ENCODE measurements at regions of chr12 and their contacts with region 1.

Region 1: DNA sequence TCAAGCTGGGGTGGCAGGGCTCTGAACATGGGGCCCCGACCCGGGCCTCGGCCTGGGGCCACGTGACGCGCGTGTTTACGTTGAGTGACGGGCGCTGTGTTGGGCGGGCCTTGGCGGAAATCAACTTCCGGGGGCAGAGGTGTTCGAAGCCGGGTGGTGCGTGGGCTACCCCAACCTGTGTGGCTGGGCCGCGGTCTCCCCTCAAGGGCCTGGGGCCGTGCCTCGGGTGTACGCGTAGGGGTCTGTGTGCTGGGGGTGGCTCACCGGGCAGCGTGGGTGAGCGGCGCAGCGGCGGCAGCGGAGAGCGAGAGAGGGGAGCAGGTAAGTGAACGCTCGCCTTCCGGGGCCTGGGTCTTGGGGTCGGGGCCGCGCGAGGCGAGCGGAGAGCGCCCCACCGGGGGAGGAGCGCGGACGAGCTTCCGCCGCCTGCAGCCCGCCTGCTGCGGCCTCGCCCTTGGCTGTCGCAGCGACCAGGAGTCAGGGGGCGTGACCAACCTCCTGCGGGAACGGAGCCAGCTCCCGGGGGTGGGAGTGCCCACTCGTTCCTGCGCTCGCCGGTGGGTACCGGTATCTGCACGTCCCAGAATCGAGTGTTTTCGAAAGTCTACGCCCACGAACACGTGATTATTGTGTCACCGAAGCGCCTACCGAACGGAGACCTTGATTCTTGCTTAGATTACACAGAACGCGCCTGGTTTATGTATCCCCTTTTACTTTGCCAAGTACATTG is at the start of gene CCDC91:
- DNase-seq: peak; percentile 80 to 96 (median 89)
- ATAC-seq: peak; percentile 77
- H3K4me3 ChIP-seq: peak within 1 kb of the TSS; percentile 58 to 90
- H3K4me3 Mint-ChIP-seq: peak within 1 kb of the TSS; percentile 97
- H3K27ac ChIP-seq: peak within 1 kb of the TSS; percentile 91 to 100
- H3K27ac Mint-ChIP-seq: peak within 1 kb of the TSS; percentile 99
- H3K4me1 ChIP-seq: peaks cover 27% of the 10 kb centered on the region
- H3K4me1 Mint-ChIP-seq: peaks cover 67% of the 10 kb centered on the region
- H3K27me3 ChIP-seq: no peaks in the 10 kb centered on the region
- H3K27me3 Mint-ChIP-seq: no peaks in the 10 kb centered on the region
- CTCF ChIP-seq: no peak
- total RNA-seq, gene CCDC91: 54.3 to 63.1 TPM

Region 2: GRCh38 chr12:27243804-27244683 is 946.4 kb before region 1 on chr12 and contains the start of gene STK38L:
- CTCF ChIA-PET with region 1: no interaction called
- POLR2A ChIA-PET with region 1: no interaction called
- intact Hi-C with region 1: loop called (anchors 10 kb)
- DNase-seq: peak; percentile 90 to 99 (median 98)
- ATAC-seq: peak; percentile 95
- H3K4me3 ChIP-seq: peak within 1 kb of the TSS; percentile 84 to 89
- H3K4me3 Mint-ChIP-seq: peak within 1 kb of the TSS; percentile 96
- H3K27ac ChIP-seq: peak within 1 kb of the TSS; percentile 76
- H3K27ac Mint-ChIP-seq: peak within 1 kb of the TSS; percentile 96
- H3K4me1 ChIP-seq: peaks cover 14% of the 10 kb centered on the region
- H3K4me1 Mint-ChIP-seq: peaks cover 52% of the 10 kb centered on the region
- H3K27me3 ChIP-seq: no peaks in the 10 kb centered on the region
- H3K27me3 Mint-ChIP-seq: no peaks in the 10 kb centered on the region
- CTCF ChIP-seq: no peak
- total RNA-seq, gene STK38L: 27.0 to 28.6 TPM

Region 3: DNA sequence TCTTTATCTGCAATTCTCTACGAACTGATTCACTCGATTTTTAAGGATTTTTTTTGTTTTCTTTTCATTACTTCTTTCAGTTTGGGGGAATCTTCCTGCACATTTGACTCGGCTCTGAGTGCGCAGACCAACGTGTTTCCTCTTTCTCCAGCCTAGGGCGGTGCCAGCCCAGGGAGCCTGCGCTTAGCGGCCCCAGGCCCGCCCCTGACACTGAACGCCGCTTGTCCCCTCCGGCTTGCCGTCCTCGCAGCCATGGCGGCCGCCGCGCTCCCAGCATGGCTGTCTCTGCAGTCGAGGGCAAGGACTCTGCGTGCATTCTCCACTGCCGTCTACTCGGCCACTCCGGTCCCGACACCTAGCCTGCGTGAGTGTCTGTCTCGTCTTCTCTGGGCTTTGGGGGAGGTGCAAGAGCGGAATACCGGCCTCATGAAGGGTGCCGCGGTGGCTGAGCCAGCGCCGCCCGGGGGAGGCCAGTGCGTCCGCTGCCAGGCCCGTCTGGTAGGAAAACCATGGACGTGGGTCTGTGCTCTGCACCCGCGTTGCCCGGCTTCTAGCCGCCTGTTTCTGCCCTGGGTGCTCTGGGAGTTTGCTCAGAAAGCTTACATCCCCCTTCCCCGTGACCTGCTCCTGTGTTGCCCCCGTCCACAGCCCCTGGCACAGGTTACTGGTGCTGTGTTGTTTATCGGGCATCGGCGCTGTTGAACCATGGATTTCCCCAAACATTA is 479.7 kb before region 1 on chr12 and contains the start of gene MRPS35:
- CTCF ChIA-PET with region 1: no interaction called
- POLR2A ChIA-PET with region 1: no interaction called
- intact Hi-C with region 1: loop called (anchors 2 to 10 kb)
- DNase-seq: peak; percentile 83 to 95 (median 90)
- ATAC-seq: peak; percentile 96
- H3K4me3 ChIP-seq: peak within 1 kb of the TSS; percentile 86 to 89
- H3K4me3 Mint-ChIP-seq: peak within 1 kb of the TSS; percentile 96
- H3K27ac ChIP-seq: peak within 1 kb of the TSS; percentile 68 to 71
- H3K27ac Mint-ChIP-seq: peak within 1 kb of the TSS; percentile 95
- H3K4me1 ChIP-seq: peaks cover 11% of the 10 kb centered on the region
- H3K4me1 Mint-ChIP-seq: peaks cover 36% of the 10 kb centered on the region
- H3K27me3 ChIP-seq: no peaks in the 10 kb centered on the region
- H3K27me3 Mint-ChIP-seq: peaks cover 6% of the 10 kb centered on the region
- CTCF ChIP-seq: no peak
- total RNA-seq, gene MRPS35: 30.0 to 30.8 TPM

Region 4: DNA sequence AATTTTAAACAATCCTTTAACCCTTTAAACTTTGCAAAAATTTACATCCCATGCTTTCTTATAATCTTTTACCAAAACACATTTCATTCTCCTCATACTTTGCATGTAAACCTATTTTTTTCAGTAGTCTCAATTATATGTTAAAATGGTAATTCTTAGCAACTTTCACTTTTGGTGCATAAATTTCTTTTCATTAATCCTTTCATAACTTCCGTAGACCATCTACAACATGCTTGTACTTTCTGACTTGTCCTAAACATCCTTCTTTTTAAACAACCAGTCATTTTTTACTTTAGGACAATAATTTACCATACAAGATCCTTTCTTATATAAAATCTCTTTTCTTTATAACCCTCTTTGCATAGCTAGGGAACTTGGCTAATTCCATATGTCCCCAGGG is 19.3 kb after region 1 on chr12:
- CTCF ChIA-PET with region 1: no interaction called
- POLR2A ChIA-PET with region 1: interaction called, 10 read pairs
- intact Hi-C with region 1: no loop called
- DNase-seq: no peak
- ATAC-seq: no peak
- H3K4me3 ChIP-seq: no peak overlapping the region
- H3K4me3 Mint-ChIP-seq: no peak overlapping the region
- H3K27ac ChIP-seq: no peak overlapping the region
- H3K27ac Mint-ChIP-seq: no peak overlapping the region
- H3K4me1 ChIP-seq: no peaks in the 10 kb centered on the region
- H3K4me1 Mint-ChIP-seq: peaks cover 31% of the 10 kb centered on the region
- H3K27me3 ChIP-seq: no peaks in the 10 kb centered on the region
- H3K27me3 Mint-ChIP-seq: no peaks in the 10 kb centered on the region
- CTCF ChIP-seq: no peak

Region 5: DNA sequence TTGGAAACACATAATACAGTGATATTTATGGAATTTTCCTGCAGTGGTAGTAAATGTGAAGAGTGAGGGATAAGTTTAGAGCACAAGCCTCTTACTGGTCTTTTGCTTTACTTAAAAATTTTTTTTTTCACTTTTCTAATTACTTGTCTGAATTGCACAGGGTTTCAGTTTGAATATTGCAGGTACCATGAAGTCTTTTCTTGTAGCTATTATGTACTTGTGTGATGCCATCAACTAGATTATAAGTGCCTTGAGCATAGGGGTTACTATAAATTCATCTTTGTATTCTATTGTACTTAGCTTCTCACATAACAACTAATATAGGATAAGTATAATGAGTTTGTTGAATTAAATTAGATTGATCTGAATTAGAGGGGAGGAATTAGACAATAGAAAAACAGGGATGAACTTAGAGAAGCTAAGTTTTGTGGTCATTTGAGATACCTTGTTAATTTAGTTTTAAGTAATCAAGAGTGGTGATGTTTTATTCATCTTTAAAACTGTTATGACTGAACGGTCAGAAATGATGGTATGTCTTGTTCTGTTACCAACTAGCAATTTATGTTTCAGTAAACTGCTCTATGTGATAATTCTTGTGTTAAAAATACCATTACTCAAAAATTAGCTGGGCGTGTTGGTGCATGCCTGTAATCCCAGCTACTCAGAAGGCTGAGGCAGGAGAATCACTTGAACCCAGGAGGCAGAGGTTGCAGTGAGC is 41.9 kb after region 1 on chr12:
- CTCF ChIA-PET with region 1: no interaction called
- POLR2A ChIA-PET with region 1: interaction called, 3 read pairs
- intact Hi-C with region 1: loop called in 1 of 2 experiments (anchors 5 kb)
- DNase-seq: no peak
- ATAC-seq: no peak
- H3K4me3 ChIP-seq: no peak overlapping the region
- H3K4me3 Mint-ChIP-seq: no peak overlapping the region
- H3K27ac ChIP-seq: no peak overlapping the region
- H3K27ac Mint-ChIP-seq: no peak overlapping the region
- H3K4me1 ChIP-seq: no peaks in the 10 kb centered on the region
- H3K4me1 Mint-ChIP-seq: peaks cover 55% of the 10 kb centered on the region
- H3K27me3 ChIP-seq: no peaks in the 10 kb centered on the region
- H3K27me3 Mint-ChIP-seq: no peaks in the 10 kb centered on the region
- CTCF ChIP-seq: no peak

Region 6: DNA sequence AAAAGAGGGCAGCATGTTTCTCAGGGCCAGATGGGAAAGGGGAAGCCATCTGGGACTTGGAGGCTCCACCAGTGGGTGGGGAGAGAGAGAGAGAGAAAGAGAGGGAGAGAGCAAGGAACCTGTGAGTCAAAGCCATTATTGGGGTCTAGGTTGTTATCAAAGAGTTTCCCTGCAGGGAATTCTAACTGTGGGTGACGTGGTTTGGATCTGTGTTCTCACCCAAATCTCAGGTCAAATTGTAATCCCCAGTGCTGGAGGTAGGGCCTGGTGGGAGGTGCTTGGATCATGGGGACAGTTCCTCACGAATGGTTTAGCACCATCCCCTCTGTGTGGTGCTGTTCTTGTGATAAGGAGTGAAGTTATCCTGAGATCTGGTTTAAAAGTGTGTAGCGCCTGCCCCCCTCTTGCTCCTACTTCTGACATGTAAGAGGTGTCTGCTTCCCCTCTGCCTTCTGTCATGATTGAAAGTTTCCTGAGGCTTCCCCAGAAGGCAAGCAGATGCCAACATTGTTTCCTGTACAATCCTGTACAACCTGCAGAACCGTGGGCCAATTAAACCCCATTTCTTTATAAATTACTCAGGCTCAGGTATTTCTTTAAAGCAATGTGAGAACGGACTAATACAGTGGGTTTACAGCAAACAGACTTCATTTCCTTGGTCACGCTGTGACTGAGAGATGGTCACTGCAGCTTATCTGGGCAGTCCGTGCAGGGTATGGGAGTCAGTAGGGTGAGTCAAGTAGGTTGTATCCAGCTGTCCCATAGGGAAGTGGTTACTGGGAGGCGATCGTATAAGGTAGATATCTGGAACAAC is 52.2 kb after region 1 on chr12:
- CTCF ChIA-PET with region 1: no interaction called
- POLR2A ChIA-PET with region 1: no interaction called
- intact Hi-C with region 1: no loop called
- DNase-seq: no peak
- ATAC-seq: no peak
- H3K4me3 ChIP-seq: no peak overlapping the region
- H3K4me3 Mint-ChIP-seq: no peak overlapping the region
- H3K27ac ChIP-seq: no peak overlapping the region
- H3K27ac Mint-ChIP-seq: peak overlapping the region; percentile 32
- H3K4me1 ChIP-seq: no peaks in the 10 kb centered on the region
- H3K4me1 Mint-ChIP-seq: peaks cover 21% of the 10 kb centered on the region
- H3K27me3 ChIP-seq: no peaks in the 10 kb centered on the region
- H3K27me3 Mint-ChIP-seq: no peaks in the 10 kb centered on the region
- CTCF ChIP-seq: no peak